Ascending aorta (tissue), 2 donors: ENCODE measurements at regions of chr4 and their contacts with region 1.

Region 1: DNA sequence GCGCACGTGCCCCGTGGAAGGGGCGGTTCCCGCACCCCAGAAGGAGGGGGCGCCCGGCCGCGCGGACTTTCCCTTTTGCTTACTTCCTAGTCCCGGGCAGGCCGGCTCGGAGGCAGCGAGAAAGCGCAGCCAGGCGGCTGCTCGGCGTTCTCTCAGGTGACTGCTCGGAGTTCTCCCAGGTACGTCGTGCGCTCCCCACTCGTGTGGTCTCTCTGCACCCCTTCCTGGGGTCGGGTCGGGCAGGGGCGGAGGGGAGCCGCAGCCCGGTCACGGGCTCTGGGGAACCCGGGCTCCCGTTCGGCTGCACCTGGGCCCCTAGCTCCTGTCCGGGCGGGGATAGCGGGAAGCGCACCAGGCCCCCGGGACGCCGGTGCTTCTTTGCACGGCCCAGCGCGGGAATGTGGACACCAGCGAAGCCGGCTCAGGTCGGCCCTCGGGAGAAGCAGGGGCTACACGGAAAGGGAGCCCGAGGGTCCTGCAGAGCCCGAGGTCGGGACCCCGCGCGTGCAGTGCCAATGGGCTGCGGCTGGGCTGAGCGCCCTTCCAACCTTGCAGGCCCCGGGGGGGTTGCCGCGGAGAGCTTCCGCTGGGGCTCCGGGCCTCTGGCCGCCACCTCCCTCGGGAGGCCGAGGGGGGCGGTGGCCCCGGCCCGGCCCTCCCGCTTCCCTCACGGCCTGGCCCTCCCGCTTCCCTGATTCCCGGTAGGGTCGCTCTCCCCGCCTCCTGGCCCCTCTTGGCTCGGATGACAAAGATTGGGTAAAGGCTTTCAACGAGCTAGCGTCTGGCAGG is at the start of gene TLR2:
- DNase-seq: peak; percentile 22 to 87
- H3K4me3 ChIP-seq: peak within 1 kb of the TSS; percentile 63 to 69
- H3K27ac ChIP-seq: peak within 1 kb of the TSS; percentile 39 to 52
- H3K4me1 ChIP-seq: no peaks in the 10 kb centered on the region
- H3K27me3 ChIP-seq: no peaks in the 10 kb centered on the region
- CTCF ChIP-seq: no peak
- total RNA-seq, gene TLR2: 19.1 TPM

Region 2: GRCh38 chr4:153649572-153649991 is 34.8 kb before region 1 on chr4:
- intact Hi-C with region 1: loop called (anchors 5 kb)
- DNase-seq: no peak
- H3K4me3 ChIP-seq: no peak overlapping the region
- H3K27ac ChIP-seq: no peak overlapping the region
- H3K4me1 ChIP-seq: peaks cover 0 to 11% of the 10 kb centered on the region in 2 donors
- H3K27me3 ChIP-seq: no peaks in the 10 kb centered on the region
- CTCF ChIP-seq: no peak

Region 3: DNA sequence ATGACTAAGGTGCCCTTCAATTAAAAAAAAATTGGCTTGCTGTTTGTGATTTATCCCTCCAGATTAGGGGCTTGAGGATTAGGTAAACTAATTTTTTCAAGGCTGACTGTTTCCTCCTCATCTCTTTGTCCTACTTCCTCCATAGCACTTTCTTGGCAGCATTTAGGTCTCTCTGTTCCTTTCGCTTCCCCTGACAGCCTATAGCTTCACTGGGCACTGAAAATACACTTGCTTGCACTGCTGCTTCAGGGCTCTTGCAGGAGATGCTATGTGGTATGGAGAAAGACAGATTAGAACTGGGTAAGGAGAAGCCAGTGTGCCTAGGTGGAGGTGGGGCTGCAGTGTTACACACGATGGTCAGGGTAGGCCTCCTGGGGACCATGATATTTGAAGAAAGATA is 216.8 kb after region 1 on chr4:
- intact Hi-C with region 1: no loop called
- DNase-seq: no peak
- H3K4me3 ChIP-seq: no peak overlapping the region
- H3K27ac ChIP-seq: no peak overlapping the region
- H3K4me1 ChIP-seq: no peaks in the 10 kb centered on the region
- H3K27me3 ChIP-seq: no peaks in the 10 kb centered on the region
- CTCF ChIP-seq: no peak